Dorsolateral prefrontal cortex (tissue), 120 donors: ENCODE measurements at regions of chr1 and their contacts with region 1.

Region 1: DNA sequence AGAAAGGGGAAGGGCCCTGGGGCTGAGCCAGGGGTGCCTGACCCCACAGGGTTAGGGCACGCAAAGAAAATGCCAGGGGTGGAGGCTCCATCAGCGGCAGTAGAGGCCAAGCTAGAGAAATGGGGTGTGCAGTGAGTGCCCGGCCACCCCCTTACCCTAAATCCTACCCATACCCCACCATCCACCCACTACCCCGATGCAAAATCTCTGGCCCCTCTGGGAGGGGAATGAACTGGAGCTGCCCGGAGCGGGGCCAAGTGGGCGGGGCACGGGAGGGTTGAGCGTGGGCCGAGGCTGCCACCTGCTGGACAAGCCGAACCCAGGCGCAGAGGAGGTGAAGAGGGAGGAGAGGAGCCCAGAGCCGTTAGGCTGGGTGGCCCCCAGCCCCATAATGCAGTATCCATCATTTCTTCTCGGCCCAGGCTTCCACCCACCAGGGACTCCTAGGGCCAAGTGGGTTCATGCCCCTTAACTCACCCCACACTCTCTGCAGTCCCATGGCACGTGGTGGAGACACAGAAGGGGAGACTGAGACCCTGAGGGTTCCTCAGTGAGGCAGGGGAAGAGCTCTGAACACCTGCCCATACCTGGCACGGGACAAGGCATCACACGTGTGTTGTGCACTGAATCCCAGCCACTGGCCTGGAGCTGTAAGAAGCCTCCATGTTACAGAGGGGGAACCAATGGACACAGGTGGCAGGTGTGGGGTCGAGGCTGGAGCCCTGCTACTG is 1.4 kb upstream of the C1QC start:
- DNase-seq: peak; percentile 61 to 87 (median 78)
- H3K4me3 ChIP-seq: peak overlapping the region in 39 of 59 donors; percentile 2 to 56 (median 35)
- H3K27ac ChIP-seq: peak overlapping the region in 1 of 59 donors; percentile 15
- H3K27me3 ChIP-seq: peaks cover 0 to 10% (median 0%) of the 10 kb centered on the region in 45 donors
- CTCF ChIP-seq: peak; percentile 71 to 98 (median 95)

Region 2: DNA sequence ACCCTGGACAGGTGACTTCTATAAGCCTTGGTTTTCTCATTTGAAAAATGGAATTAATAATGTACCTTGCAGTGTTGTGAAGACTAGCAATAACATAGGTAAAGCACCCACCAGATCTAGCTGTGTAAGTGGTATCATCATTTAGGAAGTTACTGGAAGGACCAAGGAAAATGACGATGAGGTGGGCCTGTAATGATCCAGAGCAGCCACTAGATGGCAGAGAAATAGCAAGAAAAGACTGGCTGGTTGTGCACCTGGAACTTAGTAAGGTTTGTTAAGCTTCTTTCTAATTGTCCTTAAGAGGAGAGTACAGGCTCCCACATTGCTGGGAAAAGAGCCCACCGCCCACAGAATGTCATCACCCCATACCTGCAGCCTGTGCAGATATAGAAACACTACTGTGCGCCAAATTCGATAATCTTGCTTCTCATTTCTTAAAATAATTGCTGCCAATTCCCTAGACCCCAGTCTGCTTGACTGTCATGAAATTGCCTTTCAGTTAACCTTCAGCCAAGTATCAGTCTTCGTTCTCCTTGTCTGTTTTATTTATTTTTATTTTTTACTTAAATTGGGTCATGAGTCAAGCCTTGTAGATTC is 536.4 kb before region 1 on chr1:
- intact Hi-C with region 1: loop called in 1 of 2 experiments (anchors 10 kb)
- DNase-seq: peak in 1 of 10 donors; percentile 21
- H3K4me3 ChIP-seq: no peak overlapping the region
- H3K27ac ChIP-seq: peak overlapping the region in 3 of 59 donors; percentile 29 to 53 (median 52)
- H3K27me3 ChIP-seq: no peaks in the 10 kb centered on the region
- CTCF ChIP-seq: peak; percentile 66 to 91 (median 84)

Region 3: GRCh38 chr1:22416555-22417454 is 225.3 kb before region 1 on chr1:
- intact Hi-C with region 1: loop called (anchors 1 kb)
- DNase-seq: peak; percentile 28 to 83 (median 70)
- H3K4me3 ChIP-seq: peak overlapping the region in 7 of 59 donors; percentile 3 to 26 (median 18)
- H3K27ac ChIP-seq: no peak overlapping the region
- H3K27me3 ChIP-seq: peaks cover 0 to 9% (median 0%) of the 10 kb centered on the region in 45 donors
- CTCF ChIP-seq: peak; percentile 54 to 95 (median 88)

Region 4: GRCh38 chr1:22527555-22528296 is 114.3 kb before region 1 on chr1:
- intact Hi-C with region 1: loop called (anchors 5 kb)
- DNase-seq: peak in 1 of 10 donors; percentile 60
- H3K4me3 ChIP-seq: no peak overlapping the region
- H3K27ac ChIP-seq: no peak overlapping the region
- H3K27me3 ChIP-seq: no peaks in the 10 kb centered on the region
- CTCF ChIP-seq: peak in 31 of 56 donors; percentile 10 to 51 (median 28)

Region 5: DNA sequence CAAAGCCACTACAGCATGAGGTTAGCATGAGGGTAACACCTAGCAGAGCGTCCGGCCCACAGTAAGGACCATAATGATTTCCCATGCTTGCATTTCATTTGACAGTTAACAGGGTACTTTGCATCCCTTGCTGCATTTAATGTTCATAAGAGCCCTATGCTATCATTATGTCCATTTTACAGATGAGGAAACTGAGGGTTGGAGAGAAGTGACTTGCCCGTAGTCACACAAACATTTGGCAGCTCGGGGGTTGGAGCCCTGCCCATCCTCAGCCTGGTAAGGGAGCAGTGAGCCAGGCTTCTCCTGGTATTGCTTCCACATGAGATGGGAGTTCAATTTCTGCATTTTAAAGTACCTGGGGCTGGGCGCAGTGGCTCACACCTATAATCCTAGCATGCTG is 52.1 kb after region 1 on chr1:
- intact Hi-C with region 1: loop called in 1 of 2 experiments (anchors 2 kb)
- DNase-seq: no peak
- H3K4me3 ChIP-seq: no peak overlapping the region
- H3K27ac ChIP-seq: no peak overlapping the region
- H3K27me3 ChIP-seq: no peaks in the 10 kb centered on the region
- CTCF ChIP-seq: no peak